ENCODE measurements at regions of chr7 and their contacts with region 1.

Region 1: DNA sequence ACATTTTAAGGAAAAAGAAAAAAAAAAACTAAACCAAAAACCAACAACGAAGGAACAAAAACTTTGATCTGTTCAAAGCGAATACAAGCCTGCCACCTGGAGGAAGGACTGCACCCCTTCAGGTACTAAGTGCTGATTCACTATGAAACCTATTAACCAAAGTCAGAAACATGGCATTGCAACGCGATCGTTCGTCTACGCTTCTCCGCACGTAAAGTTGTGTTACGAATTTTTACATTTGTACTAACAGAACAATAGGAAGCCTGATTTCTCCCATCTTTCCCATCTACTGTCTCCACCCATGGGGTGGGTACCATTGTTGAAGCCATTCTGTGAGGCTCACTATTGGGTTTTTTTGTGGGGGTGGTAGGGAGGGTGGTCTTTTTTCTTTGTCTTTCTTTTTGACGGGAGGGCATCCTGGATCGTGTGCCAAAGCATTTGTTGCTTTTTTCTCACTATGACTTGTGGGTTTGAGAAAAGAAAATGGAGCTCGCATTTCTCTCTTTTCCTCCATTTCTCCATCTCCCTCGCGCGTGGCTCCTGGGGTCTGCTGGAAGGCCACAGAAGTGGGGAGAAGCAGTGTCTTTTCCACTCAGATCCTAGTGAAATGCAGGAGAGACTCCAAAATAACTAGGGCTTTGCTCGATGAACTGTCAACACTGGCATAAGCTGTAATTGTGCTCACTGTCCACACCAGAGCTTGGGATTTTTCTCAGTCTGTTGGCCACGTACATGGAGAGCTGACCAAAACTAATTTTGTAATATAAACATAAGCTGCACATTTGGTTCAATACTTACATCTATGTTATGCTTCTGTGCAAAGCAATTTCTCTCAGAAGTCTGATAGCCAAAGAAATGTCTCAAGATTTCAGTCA is 100.9 kb upstream of the YAE1 start:
- DNase-seq: peak; percentile 62
- ATAC-seq: peak; percentile 96
- H3K4me3 ChIP-seq: peak overlapping the region in 2 of 3 experiments; percentile 29 to 39; a peak in 1 of 6 replicates
- H3K27ac ChIP-seq: no peak overlapping the region
- H3K4me1 ChIP-seq: peaks cover 9% of the 10 kb centered on the region
- H3K27me3 ChIP-seq: peaks cover 0 to 9% of the 10 kb centered on the region in 2 experiments; a peak in 2 of 5 replicates
- CTCF ChIP-seq: peak; percentile 81
- EP300 ChIP-seq: no peak
- POLR2A ChIP-seq: no peak
- RAD21 ChIP-seq: no peak

Region 2: GRCh38 chr7:38796626-38797501 is 668.4 kb before region 1 on chr7:
- CTCF ChIA-PET with region 1: interaction called, 24 read pairs
- POLR2A ChIA-PET with region 1: no interaction called
- in situ Hi-C with region 1: loop called (anchors 5 kb)
- intact Hi-C with region 1: loop called (anchors 1 kb)
- DNase-seq: peak; percentile 46
- ATAC-seq: no peak
- H3K4me3 ChIP-seq: no peak overlapping the region
- H3K27ac ChIP-seq: no peak overlapping the region
- H3K4me1 ChIP-seq: no peaks in the 10 kb centered on the region
- H3K27me3 ChIP-seq: no peaks in the 10 kb centered on the region
- CTCF ChIP-seq: peak; percentile 72
- EP300 ChIP-seq: no peak
- POLR2A ChIP-seq: no peak
- RAD21 ChIP-seq: peak; percentile 52; the same call in 1 of the 2 replicates

Region 3: DNA sequence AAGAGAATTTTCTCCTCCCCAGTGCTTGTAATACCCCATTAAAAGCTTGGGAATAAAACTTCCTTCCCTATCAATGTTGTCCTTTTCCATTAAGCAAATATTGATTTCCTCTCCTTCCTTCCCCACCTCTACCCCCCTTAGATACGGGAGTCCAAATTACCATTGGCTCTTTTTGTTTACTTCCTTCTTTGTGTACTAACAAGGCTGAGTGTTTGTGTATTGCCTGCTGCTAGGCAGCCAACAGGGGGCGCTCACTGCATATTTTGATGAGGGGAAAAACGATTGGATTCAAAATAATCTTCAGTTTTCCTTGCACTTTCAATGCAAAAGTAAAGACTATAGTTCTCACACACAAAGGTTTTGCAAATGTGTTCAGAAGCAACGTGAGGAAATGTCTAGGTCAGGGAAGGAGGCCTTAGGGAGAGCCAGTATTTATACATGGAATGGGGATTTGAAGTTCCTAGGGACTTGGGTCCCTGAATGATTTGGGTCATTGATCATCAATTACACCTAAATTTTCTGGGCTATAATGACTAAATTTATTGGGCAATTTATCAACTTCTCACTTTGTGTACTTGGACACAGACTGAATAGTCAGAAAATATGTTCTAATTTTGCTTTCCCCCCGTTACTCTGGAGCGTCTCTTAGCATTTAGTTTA is 532.7 kb before region 1 on chr7:
- CTCF ChIA-PET with region 1: interaction called, 9 read pairs
- POLR2A ChIA-PET with region 1: no interaction called
- in situ Hi-C with region 1: loop called (anchors 5 kb)
- intact Hi-C with region 1: loop called (anchors 1 kb)
- DNase-seq: peak; percentile 28
- ATAC-seq: peak; percentile 54; the same call in 2 of the 3 replicates
- H3K4me3 ChIP-seq: no peak overlapping the region
- H3K27ac ChIP-seq: no peak overlapping the region
- H3K4me1 ChIP-seq: no peaks in the 10 kb centered on the region
- H3K27me3 ChIP-seq: no peaks in the 10 kb centered on the region
- CTCF ChIP-seq: peak; percentile 75
- EP300 ChIP-seq: no peak
- POLR2A ChIP-seq: no peak
- RAD21 ChIP-seq: 0 out of 2 replicates have a peak, but pooled peaks have one; percentile 28

Region 4: DNA sequence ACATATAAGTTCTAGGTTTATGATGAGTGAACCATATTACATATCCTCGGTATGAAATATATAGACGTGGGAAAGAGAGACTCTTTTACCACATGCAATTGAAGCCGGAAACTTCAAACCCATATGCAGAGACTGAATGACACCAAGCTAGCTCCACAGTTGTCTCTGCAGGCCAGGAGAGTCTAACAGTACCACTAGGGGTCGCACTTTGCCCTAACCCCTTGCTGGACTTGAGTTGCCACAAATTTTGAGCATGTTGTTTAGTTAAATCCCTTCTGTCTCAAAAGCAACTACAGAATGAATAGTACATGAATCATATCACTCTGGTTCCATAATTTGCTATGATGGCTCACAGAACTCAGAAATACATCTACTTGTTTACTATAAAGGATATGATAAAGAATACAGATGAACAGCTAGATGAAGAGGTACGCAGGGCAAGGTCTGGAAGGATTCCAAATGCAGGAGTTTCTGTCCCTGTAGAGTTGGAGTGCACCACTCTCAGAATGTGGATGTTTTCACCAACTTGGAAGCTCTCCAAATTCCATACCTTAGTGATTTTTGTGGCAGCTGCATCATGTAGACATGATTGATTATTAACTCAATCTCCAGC is 11.4 kb before region 1 on chr7:
- CTCF ChIA-PET with region 1: interaction called, 10 read pairs
- POLR2A ChIA-PET with region 1: no interaction called
- in situ Hi-C with region 1: no loop called
- intact Hi-C with region 1: no loop called
- DNase-seq: peak; percentile 44
- ATAC-seq: peak; percentile 86
- H3K4me3 ChIP-seq: no peak overlapping the region
- H3K27ac ChIP-seq: no peak overlapping the region
- H3K4me1 ChIP-seq: peaks cover 8% of the 10 kb centered on the region
- H3K27me3 ChIP-seq: peaks cover 0 to 14% of the 10 kb centered on the region in 2 experiments; a peak in 2 of 5 replicates
- CTCF ChIP-seq: peak; percentile 68
- EP300 ChIP-seq: no peak
- POLR2A ChIP-seq: no peak
- RAD21 ChIP-seq: no peak

Measured in HepG2 (cell line).